Heart right ventricle (tissue), 16 donors: ENCODE measurements at regions of chr5 and their contacts with region 1.

Region 1: GRCh38 chr5:138594305-138595058 is 19.3 kb upstream of the HSPA9 start:
- DNase-seq: no peak
- ATAC-seq: no peak
- H3K4me3 ChIP-seq: no peak overlapping the region
- H3K27ac ChIP-seq: no peak overlapping the region
- H3K4me1 ChIP-seq: no peaks in the 10 kb centered on the region
- H3K27me3 ChIP-seq: no peaks in the 10 kb centered on the region
- CTCF ChIP-seq: peak in 6 of 9 donors; percentile 13 to 43 (median 26)

Region 2: GRCh38 chr5:138305797-138306196 is 288.7 kb before region 1 on chr5:
- intact Hi-C with region 1: no loop called
- DNase-seq: peak; percentile 52 to 67
- ATAC-seq: peak in 7 of 8 donors; percentile 55 to 96 (median 88)
- H3K4me3 ChIP-seq: no peak overlapping the region
- H3K27ac ChIP-seq: peak overlapping the region in 2 of 10 donors; percentile 9 to 45
- H3K4me1 ChIP-seq: peaks cover 0 to 3% (median 0%) of the 10 kb centered on the region in 9 donors
- H3K27me3 ChIP-seq: no peaks in the 10 kb centered on the region
- CTCF ChIP-seq: peak in 2 of 9 donors; percentile 13 to 35

Region 3: GRCh38 chr5:139232147-139232724 is 637.8 kb after region 1 on chr5:
- intact Hi-C with region 1: loop called in 1 of 10 experiments (anchors 10 kb)
- DNase-seq: no peak
- ATAC-seq: no peak
- H3K4me3 ChIP-seq: no peak overlapping the region
- H3K27ac ChIP-seq: no peak overlapping the region
- H3K4me1 ChIP-seq: no peaks in the 10 kb centered on the region
- H3K27me3 ChIP-seq: no peaks in the 10 kb centered on the region
- CTCF ChIP-seq: no peak